ENCODE measurements at regions of chr22 and their contacts with region 1.

Region 1: DNA sequence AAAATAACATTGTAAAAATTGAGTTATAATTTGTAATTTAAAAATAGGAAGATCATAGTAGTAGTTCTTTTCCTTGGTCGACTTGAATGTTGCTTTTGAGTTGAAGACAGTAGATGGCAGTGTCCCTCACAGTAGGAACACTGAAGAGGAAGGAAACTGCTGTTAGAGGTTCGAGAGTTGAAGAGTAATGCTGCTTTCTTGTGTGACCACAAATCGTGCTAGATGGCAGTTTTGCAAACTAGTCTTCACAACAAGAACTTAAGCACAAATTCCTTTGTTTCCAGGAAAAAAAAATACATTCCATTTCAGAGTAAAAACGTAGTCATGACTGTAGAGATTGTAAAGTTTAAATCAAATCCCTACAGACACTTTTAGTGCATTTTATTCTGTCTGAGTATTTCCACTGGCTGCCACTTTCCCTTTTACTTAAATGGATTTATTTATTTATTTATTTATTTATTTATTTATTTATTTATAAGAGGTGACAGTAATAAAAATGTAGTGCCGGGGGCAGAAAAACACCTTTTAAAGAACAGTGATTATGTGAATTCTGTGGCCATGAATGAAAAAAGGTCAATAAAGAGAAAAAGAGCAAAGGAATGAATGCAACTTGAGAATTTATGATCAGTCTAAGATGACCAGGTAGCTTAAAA is 54.6 kb downstream of the SPECC1L start:
- DNase-seq: peak; percentile 57
- H3K4me3 ChIP-seq: no peak overlapping the region
- H3K27ac ChIP-seq: no peak overlapping the region
- H3K27me3 ChIP-seq: no peaks in the 10 kb centered on the region
- CTCF ChIP-seq: peak; percentile 83

Region 2: DNA sequence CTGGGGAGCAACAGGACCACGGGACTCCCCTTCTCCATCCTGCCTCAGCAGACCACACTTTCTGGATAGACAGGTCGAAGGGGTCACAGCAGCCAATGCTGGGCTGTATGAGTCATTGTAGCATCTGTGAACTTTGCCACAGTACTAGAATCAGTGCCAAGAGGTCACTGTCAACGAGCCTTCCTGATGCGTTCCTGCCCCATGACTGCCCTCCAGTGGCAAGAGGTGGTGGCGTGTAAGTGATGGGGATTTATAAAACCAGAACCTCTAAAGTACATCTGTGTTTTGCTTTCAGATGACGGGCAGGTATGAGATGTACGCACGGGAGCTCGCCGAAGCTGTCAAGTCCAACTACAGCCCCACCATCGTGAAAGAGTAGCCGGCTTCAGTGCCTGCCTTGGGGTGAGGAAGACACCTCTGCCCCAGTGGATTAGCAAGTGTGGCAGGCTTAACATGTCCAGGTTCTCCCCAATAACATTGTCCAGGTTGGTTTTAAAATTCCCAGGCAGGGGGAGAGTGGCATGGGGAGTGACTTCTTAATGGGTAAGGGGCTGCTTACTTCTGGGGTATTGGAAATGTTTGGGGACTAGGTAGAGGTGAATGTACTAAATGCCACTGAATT is 200.3 kb after region 1 on chr22:
- CTCF ChIA-PET with region 1: interaction called, 13 read pairs
- POLR2A ChIA-PET with region 1: no interaction called
- DNase-seq: no peak
- H3K4me3 ChIP-seq: no peak overlapping the region
- H3K27ac ChIP-seq: no peak overlapping the region
- H3K27me3 ChIP-seq: peaks cover 2% of the 10 kb centered on the region
- CTCF ChIP-seq: peak; percentile 92